Adrenal gland (tissue), 19 donors: ENCODE measurements at regions of chr19 and their contacts with region 1.

Region 1: GRCh38 chr19:2391118-2391725 is 31.2 kb downstream of the TMPRSS9 start:
- DNase-seq: peak in 6 of 7 donors; percentile 35 to 71 (median 54)
- H3K4me3 ChIP-seq: no peak overlapping the region
- H3K27ac ChIP-seq: no peak overlapping the region
- H3K4me1 ChIP-seq: no peaks in the 10 kb centered on the region
- H3K27me3 ChIP-seq: peaks cover under 1% of the 10 kb centered on the region
- CTCF ChIP-seq: peak; percentile 55 to 94 (median 72)
- POLR2A ChIP-seq: no peak

Region 2: DNA sequence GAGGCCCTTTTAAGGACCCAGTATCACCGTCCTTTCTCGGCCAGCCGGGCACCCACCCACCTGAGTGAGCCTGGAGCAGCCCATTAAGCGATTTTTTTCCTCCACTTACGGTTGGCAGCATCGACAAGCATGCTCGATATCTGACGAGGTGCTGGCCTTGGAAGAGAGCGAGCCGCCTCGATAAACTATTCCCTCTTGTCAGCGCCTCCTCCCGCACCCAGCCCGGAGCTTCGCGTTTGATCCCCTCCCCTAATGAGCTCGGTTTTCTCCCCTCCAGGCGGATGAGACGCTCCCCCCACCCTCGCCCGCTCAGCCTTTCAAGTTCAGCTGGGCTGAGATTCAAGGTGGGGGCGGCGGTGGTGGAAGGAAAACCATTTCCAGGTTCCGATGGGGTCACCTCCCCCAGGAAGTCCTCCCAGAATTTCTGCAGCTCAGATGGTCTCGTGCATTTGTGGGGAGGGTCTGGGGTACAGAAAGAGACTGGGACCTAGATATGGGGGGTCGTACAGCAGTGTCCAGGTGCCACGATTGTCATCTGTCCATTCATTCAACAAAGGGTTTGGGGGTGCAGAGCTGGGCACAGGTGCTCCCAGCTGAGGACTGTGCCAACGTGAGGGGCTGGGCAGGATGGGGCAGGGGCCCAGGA is 656.8 kb before region 1 on chr19:
- intact Hi-C with region 1: no loop called
- DNase-seq: no peak
- H3K4me3 ChIP-seq: no peak overlapping the region
- H3K27ac ChIP-seq: no peak overlapping the region
- H3K4me1 ChIP-seq: no peaks in the 10 kb centered on the region
- H3K27me3 ChIP-seq: peaks cover 62% of the 10 kb centered on the region
- CTCF ChIP-seq: no peak
- POLR2A ChIP-seq: no peak

Region 3: DNA sequence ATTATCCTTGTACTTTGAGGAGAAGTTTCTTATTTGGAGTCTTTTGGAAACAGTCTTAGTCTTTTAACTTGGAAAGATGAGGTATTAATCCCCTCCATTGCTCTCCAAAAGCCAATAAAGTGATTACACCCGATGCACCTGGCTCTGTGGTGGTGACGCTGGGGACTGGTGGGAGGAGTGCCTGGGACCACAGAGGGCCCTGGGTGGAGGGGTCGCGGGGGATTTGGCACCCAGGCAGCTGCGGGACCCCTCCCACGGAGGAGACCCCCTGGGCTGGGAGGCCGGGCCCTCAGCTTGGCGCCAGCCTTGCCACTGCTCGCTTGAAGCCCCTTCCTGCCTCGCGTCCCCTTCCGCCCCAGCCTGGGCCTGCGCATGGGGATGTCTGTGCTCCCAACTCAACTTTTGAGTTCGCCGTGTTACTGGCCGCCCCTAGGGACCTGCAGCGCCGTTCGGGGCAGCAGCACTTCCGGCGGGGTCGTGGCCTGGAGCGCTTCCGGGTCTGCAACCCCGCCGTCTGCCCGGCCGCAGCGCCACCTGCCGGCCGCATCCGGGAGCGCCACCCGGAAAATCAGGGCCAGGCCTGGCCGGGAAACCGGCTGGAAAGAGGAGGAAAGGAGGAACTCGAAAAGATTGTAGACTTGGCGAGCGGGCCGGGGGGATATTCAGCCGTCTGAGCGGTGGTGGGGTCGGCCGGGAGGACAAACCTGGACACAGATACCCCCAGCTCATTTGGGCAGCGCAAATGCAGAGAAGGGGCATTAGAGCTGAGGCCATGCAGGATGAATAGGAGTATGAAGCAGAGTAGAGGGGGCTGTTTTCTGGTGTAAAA is 117.7 kb before region 1 on chr19:
- intact Hi-C with region 1: loop called in 1 of 2 experiments (anchors 5 kb)
- DNase-seq: peak; percentile 65 to 84 (median 75)
- H3K4me3 ChIP-seq: peak overlapping the region in 1 of 4 donors; percentile 39
- H3K27ac ChIP-seq: peak overlapping the region in 4 of 5 donors; percentile 58 to 100 (median 77)
- H3K4me1 ChIP-seq: peaks cover 31 to 53% of the 10 kb centered on the region in 2 donors
- H3K27me3 ChIP-seq: no peaks in the 10 kb centered on the region
- CTCF ChIP-seq: peak; percentile 83 to 99 (median 97)
- POLR2A ChIP-seq: peak in 1 of 2 donors; percentile 13

Region 4: DNA sequence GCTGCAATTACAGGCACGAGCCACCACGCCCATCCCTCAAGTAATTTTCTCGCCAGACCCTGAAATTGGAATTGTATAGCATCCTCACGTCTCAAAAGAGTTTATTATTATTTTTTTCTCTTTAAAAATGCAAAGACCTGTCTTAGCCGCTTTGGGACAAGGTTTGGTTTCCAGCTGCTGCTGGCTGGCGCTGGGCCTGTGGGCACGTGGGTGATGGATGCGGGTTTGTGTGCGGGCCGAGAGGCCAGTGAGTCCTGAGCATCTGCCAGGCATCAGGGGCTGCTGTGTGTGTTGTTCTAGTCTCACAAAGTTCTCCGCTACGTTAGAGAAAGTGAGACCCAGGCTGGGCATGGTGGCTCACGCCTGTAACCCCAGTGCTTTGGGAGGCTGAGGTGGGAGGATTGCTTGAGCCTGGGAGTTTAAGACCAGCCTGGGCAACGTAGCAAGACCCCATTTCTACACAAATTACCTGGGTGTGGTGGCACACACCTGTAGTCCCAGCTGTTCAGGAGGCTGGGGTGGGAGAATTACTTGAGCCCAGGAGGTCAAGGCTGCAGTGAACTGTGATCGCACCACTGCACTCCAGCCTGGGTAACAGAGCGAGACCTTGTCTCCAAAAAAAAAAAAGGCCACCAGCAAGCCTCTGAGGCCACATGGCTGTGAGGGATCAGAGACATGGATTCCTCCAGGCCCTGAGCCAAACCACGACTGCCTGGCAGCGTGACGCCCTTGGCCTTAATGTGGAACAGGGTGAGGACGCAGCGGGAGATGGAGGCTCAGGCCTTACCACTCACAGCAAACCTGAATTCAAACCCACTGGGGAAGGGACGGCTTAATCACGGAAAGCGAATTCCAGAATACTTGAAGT is 35.8 kb before region 1 on chr19:
- intact Hi-C with region 1: no loop called
- DNase-seq: peak; percentile 45 to 74 (median 67)
- H3K4me3 ChIP-seq: no peak overlapping the region
- H3K27ac ChIP-seq: peak overlapping the region in 1 of 5 donors; percentile 16
- H3K4me1 ChIP-seq: no peaks in the 10 kb centered on the region
- H3K27me3 ChIP-seq: no peaks in the 10 kb centered on the region
- CTCF ChIP-seq: no peak
- POLR2A ChIP-seq: no peak

Region 5: DNA sequence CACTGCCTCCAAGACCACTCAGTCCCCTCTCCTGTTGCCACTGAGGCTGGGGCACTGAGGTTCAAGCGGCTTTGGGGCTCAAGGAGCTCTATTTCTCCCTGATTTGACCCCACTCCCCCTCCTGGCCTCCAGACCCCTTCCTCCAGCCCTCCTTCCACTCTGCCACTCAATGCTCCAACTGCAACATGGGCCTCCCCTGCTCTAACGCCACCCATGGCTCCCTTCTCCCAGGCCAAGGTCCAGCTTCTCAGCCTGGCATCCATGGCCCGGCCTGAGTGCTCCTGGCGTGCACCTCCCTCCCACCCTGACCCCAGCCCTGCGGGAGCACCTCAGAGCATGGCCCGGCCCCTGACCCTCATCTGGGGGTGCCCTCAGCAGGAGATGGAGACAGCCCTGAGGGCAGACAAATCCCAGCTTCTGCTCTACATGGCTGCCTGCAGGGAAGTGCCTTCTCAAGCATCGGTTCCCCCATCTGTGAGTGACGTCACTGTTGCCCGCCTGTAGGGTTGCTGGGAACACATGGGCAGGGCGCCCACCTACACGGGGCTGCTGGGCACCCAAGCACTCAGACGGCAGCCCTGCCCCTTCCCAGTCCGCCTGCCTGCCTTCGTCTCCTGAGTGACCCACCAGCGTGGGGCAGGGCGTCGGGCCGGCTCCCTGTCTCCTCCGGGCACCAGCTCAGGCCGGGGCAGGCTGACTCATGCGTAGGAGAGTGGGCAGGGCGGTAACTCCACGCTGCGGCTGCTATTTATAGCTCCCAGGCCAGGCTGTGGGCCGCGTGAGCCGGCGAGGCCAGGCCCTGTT is 331.5 kb after region 1 on chr19:
- intact Hi-C with region 1: no loop called
- DNase-seq: peak; percentile 84 to 94 (median 90)
- H3K4me3 ChIP-seq: no peak overlapping the region
- H3K27ac ChIP-seq: peak overlapping the region in 3 of 5 donors; percentile 16 to 73 (median 66)
- H3K4me1 ChIP-seq: peaks cover 12 to 24% of the 10 kb centered on the region in 2 donors
- H3K27me3 ChIP-seq: peaks cover 5% of the 10 kb centered on the region
- CTCF ChIP-seq: no peak
- POLR2A ChIP-seq: peak in 1 of 2 donors; percentile 32